ENCODE measurements at regions of chr6 and their contacts with region 1.

Region 1: DNA sequence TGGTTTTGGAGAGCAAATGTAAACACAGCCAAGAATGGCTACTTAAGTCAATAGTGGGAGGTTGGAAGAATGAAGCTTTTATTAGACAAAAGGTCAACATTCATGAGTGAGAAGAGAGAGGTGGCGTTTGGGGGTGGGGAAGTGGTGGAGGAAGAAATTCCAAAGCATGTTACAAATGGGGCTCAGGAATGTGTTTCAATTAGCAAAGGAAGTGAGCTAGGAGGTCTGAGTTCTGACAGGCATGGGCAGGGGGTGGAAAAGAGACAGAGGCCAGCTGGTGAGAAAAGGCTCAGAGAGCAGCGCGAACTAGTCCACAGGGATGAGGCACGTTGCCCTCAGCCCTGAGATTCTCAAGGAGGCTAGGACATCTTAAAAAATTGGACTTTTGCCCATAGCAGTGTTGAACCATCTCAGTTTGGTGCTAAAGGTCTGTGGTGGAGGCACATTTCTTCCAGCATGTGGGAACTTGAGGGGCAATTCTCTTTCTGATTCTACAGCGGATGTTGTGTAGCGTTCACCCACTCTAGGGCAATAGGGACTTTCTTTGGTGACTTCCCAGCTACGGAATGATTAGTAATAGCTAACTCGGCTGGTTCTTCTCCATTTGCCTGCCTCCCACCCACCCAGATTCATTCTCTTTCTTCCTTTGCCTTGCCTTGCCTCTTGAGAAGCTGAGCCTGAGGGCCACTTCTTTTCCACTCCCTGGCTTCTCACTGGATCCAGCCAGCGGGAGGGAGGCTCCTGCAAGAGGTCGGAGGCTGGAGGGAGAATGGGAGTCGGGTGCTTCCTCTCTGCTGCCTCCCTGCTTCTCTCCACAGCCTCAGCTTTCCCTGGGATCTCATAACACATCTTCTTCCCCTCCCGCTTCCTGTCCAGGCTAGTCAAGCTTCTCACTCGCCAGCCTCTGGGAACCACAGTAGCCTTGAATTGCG is 45.1 kb upstream of the NEDD9 start:
- DNase-seq: peak in 1 of 2 donors; percentile 66
- ATAC-seq: peak in 1 of 3 donors; percentile 33
- H3K4me3 ChIP-seq: no peak overlapping the region
- H3K4me3 Mint-ChIP-seq: no peak overlapping the region
- H3K27ac ChIP-seq: peak overlapping the region; percentile 35
- H3K27ac Mint-ChIP-seq: peak overlapping the region; percentile 35 to 82
- H3K4me1 ChIP-seq: peaks cover 18% of the 10 kb centered on the region
- H3K4me1 Mint-ChIP-seq: peaks cover 49 to 56% of the 10 kb centered on the region in 2 donors
- H3K27me3 ChIP-seq: no peaks in the 10 kb centered on the region
- H3K27me3 Mint-ChIP-seq: no peaks in the 10 kb centered on the region
- CTCF ChIP-seq: no peak

Region 2: DNA sequence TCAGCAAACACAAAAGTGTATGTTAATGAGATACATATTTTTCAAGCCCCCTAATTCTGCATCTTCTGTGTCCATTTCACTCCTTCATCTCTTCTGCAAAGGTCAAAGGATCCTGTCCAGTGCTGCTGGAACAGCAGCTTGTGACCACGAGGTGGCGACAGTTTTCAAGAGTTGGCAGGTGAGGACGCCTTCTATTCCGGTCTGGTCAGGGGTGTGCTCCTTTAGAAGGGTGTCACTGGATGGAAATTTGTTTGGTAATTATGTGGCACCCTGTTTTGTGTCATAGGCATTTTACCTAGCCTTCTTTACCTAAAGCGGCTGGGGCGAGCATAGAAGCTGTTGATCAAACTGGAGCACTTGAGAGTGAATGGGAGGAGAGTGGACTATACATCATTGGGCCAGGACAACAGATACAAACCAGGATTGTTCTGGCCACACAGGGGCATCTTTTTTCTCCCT is 133.1 kb before region 1 on chr6:
- intact Hi-C with region 1: no loop called
- DNase-seq: peak; percentile 63 to 86
- ATAC-seq: peak; percentile 82 to 97 (median 96)
- H3K4me3 ChIP-seq: no peak overlapping the region
- H3K4me3 Mint-ChIP-seq: no peak overlapping the region
- H3K27ac ChIP-seq: no peak overlapping the region
- H3K27ac Mint-ChIP-seq: no peak overlapping the region
- H3K4me1 ChIP-seq: peaks cover 3% of the 10 kb centered on the region
- H3K4me1 Mint-ChIP-seq: peaks cover 4 to 5% of the 10 kb centered on the region in 2 donors
- H3K27me3 ChIP-seq: no peaks in the 10 kb centered on the region
- H3K27me3 Mint-ChIP-seq: no peaks in the 10 kb centered on the region
- CTCF ChIP-seq: peak; percentile 86

Region 3: DNA sequence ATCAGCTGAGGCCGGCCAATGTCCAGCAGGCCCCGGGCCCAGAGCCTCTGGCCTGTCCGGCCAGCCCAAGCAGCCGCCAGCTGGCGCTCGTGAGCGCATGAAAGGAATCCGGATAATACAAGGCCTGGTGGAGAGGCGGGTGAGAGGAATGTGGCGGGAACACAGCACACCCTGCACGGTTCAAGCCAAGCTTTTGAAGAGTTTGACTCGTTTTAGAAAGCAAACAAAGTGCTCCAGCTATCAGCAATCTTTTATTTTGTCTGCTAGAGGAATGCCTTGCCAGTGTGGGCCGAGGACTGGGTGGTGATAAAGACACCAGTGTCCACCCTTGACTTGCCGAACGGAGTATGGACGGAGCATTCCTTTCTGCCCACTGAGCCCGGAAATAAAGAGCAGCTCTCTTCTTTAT is 35.7 kb before region 1 on chr6:
- intact Hi-C with region 1: no loop called
- DNase-seq: no peak
- ATAC-seq: no peak
- H3K4me3 ChIP-seq: no peak overlapping the region
- H3K4me3 Mint-ChIP-seq: no peak overlapping the region
- H3K27ac ChIP-seq: no peak overlapping the region
- H3K27ac Mint-ChIP-seq: no peak overlapping the region
- H3K4me1 ChIP-seq: peaks cover 3% of the 10 kb centered on the region
- H3K4me1 Mint-ChIP-seq: peaks cover 39 to 44% of the 10 kb centered on the region in 2 donors
- H3K27me3 ChIP-seq: no peaks in the 10 kb centered on the region
- H3K27me3 Mint-ChIP-seq: no peaks in the 10 kb centered on the region
- CTCF ChIP-seq: no peak

Region 4: DNA sequence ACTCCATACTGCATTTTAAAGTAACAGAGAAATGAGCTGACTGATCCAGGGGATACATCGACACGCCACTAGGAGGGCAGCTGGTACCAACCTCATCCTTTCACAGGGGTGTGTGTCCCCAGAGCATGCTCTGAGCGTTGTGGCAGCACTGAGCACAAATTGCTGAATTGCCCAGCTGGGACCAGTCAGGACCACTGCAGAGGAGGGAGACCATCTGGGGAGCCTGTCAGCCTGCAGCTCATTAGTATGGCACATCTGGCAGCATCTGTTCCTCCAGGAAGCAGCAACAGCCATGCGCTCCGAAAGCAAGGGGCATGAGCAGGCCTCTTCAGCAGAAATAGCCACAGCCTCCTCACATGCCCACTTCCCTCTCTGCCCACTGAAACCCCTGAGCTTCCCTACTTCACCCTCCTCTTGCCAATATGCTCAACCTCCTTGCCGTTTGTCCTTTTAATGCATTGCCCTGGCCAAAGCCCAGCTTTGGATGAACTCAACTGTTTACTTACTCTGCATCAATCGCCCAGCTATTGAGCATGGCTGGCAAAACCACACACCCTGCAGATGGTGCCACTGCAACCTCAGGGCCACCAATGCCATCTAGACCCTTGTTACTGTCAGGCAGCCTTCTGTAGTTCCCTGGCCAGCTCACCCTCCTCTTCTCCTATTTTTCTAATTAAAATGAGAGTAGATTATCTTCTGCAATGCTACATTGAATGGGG is 32.6 kb after region 1 on chr6:
- intact Hi-C with region 1: loop called (anchors 5 kb)
- DNase-seq: no peak
- ATAC-seq: no peak
- H3K4me3 ChIP-seq: no peak overlapping the region
- H3K4me3 Mint-ChIP-seq: no peak overlapping the region
- H3K27ac ChIP-seq: no peak overlapping the region
- H3K27ac Mint-ChIP-seq: peak overlapping the region in 1 of 2 donors; percentile 47
- H3K4me1 ChIP-seq: peaks cover 15% of the 10 kb centered on the region
- H3K4me1 Mint-ChIP-seq: peaks cover 32 to 40% of the 10 kb centered on the region in 2 donors
- H3K27me3 ChIP-seq: no peaks in the 10 kb centered on the region
- H3K27me3 Mint-ChIP-seq: no peaks in the 10 kb centered on the region
- CTCF ChIP-seq: no peak

Measured in natural killer cell (primary cell).